Naive thymus-derived CD4-positive, alpha-beta T cell (primary cell): ENCODE measurements at regions of chr13 and their contacts with region 1.

Region 1: GRCh38 chr13:40982772-40983171 is 36.3 kb downstream of the ELF1 start:
- DNase-seq: peak in 8 of 9 donors; percentile 41 to 90 (median 80)
- ATAC-seq: peak; percentile 82
- H3K4me3 ChIP-seq: no peak overlapping the region
- H3K4me3 Mint-ChIP-seq: peak overlapping the region; percentile 76 to 99 (median 94)
- H3K27ac ChIP-seq: peak overlapping the region; percentile 86
- H3K27ac Mint-ChIP-seq: peak overlapping the region; percentile 93 to 98 (median 96)
- H3K4me1 ChIP-seq: peaks cover 30 to 34% of the 10 kb centered on the region in 2 donors
- H3K4me1 Mint-ChIP-seq: peaks cover 40 to 77% (median 65%) of the 10 kb centered on the region in 7 donors
- H3K27me3 ChIP-seq: no peaks in the 10 kb centered on the region
- H3K27me3 Mint-ChIP-seq: no peaks in the 10 kb centered on the region

Region 2: DNA sequence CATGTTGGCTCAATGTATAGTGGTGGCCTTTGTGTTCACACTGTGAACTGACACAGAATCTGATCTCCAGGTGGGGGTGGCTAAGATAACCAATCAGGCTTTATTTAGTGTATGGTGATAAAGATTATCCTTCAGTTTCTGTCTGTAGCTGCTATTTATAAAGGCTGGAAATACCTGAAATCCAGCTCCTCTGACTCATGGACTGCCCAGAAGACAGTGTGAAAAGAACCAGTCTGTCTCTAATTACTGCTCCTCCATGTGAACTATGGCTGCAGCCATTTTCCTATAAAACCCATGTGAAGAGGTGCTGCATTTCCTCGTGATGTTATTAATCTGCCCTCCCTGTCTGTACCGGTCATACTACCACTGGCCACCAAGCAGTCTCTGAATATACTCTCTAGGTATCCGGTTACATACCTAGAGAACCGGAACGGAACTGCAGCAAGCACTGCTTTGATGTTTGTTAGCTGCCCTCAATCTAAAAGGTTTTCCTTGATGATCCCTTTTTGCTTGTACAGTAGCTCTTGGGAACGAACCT is 1617.8 kb before region 1 on chr13:
- CTCF ChIA-PET with region 1: no interaction called
- POLR2A ChIA-PET with region 1: no interaction called
- intact Hi-C with region 1: no loop called
- DNase-seq: no peak
- ATAC-seq: no peak
- H3K4me3 ChIP-seq: no peak overlapping the region
- H3K4me3 Mint-ChIP-seq: no peak overlapping the region
- H3K27ac ChIP-seq: no peak overlapping the region
- H3K27ac Mint-ChIP-seq: no peak overlapping the region
- H3K4me1 ChIP-seq: no peaks in the 10 kb centered on the region
- H3K4me1 Mint-ChIP-seq: no peaks in the 10 kb centered on the region
- H3K27me3 ChIP-seq: peaks cover 0 to 6% of the 10 kb centered on the region in 2 donors
- H3K27me3 Mint-ChIP-seq: peaks cover 0 to 30% (median 20%) of the 10 kb centered on the region in 5 donors

Region 3: GRCh38 chr13:40494513-40494912 is 488.3 kb before region 1 on chr13:
- CTCF ChIA-PET with region 1: no interaction called
- POLR2A ChIA-PET with region 1: no interaction called
- intact Hi-C with region 1: loop called in 1 of 2 experiments (anchors 5 kb)
- DNase-seq: peak in 7 of 9 donors; percentile 18 to 64 (median 59)
- ATAC-seq: peak; percentile 66
- H3K4me3 ChIP-seq: peak overlapping the region; percentile 49
- H3K4me3 Mint-ChIP-seq: peak overlapping the region; percentile 76 to 97 (median 85)
- H3K27ac ChIP-seq: peak overlapping the region; percentile 70
- H3K27ac Mint-ChIP-seq: peak overlapping the region; percentile 88 to 98 (median 96)
- H3K4me1 ChIP-seq: peaks cover 38 to 66% of the 10 kb centered on the region in 2 donors
- H3K4me1 Mint-ChIP-seq: peaks cover 54 to 92% (median 85%) of the 10 kb centered on the region in 7 donors
- H3K27me3 ChIP-seq: no peaks in the 10 kb centered on the region
- H3K27me3 Mint-ChIP-seq: no peaks in the 10 kb centered on the region

Region 4: GRCh38 chr13:40819797-40820315 is 162.9 kb before region 1 on chr13:
- CTCF ChIA-PET with region 1: no interaction called
- POLR2A ChIA-PET with region 1: no interaction called
- intact Hi-C with region 1: no loop called
- DNase-seq: no peak
- ATAC-seq: no peak
- H3K4me3 ChIP-seq: no peak overlapping the region
- H3K4me3 Mint-ChIP-seq: no peak overlapping the region
- H3K27ac ChIP-seq: no peak overlapping the region
- H3K27ac Mint-ChIP-seq: peak overlapping the region in 1 of 9 donors; percentile 24
- H3K4me1 ChIP-seq: no peaks in the 10 kb centered on the region
- H3K4me1 Mint-ChIP-seq: peaks cover 0 to 14% (median 0%) of the 10 kb centered on the region in 7 donors
- H3K27me3 ChIP-seq: no peaks in the 10 kb centered on the region
- H3K27me3 Mint-ChIP-seq: no peaks in the 10 kb centered on the region

Region 5: GRCh38 chr13:40946485-40946884 is 36.3 kb before region 1 on chr13:
- CTCF ChIA-PET with region 1: no interaction called
- POLR2A ChIA-PET with region 1: no interaction called
- intact Hi-C with region 1: loop called in 1 of 2 experiments (anchors 5 kb)
- DNase-seq: no peak
- ATAC-seq: no peak
- H3K4me3 ChIP-seq: no peak overlapping the region
- H3K4me3 Mint-ChIP-seq: no peak overlapping the region
- H3K27ac ChIP-seq: no peak overlapping the region
- H3K27ac Mint-ChIP-seq: peak overlapping the region in 8 of 9 donors; percentile 58 to 91 (median 74)
- H3K4me1 ChIP-seq: peaks cover 3 to 4% of the 10 kb centered on the region in 2 donors
- H3K4me1 Mint-ChIP-seq: peaks cover 25 to 74% (median 51%) of the 10 kb centered on the region in 7 donors
- H3K27me3 ChIP-seq: no peaks in the 10 kb centered on the region
- H3K27me3 Mint-ChIP-seq: no peaks in the 10 kb centered on the region

Region 6: GRCh38 chr13:40992678-40993518 is 10.1 kb after region 1 on chr13:
- CTCF ChIA-PET with region 1: interaction called, 9 read pairs
- POLR2A ChIA-PET with region 1: interaction called, 12 read pairs
- intact Hi-C with region 1: loop called (anchors 1 kb)
- DNase-seq: peak in 1 of 9 donors; percentile 52
- ATAC-seq: peak; percentile 50
- H3K4me3 ChIP-seq: no peak overlapping the region
- H3K4me3 Mint-ChIP-seq: peak overlapping the region; percentile 12 to 57 (median 46)
- H3K27ac ChIP-seq: peak overlapping the region; percentile 57
- H3K27ac Mint-ChIP-seq: peak overlapping the region; percentile 54 to 94 (median 87)
- H3K4me1 ChIP-seq: peaks cover 48 to 64% of the 10 kb centered on the region in 2 donors
- H3K4me1 Mint-ChIP-seq: peaks cover 58 to 98% (median 91%) of the 10 kb centered on the region in 7 donors
- H3K27me3 ChIP-seq: no peaks in the 10 kb centered on the region
- H3K27me3 Mint-ChIP-seq: no peaks in the 10 kb centered on the region

Region 7: GRCh38 chr13:41019011-41019487 is 36.3 kb after region 1 on chr13 and contains the start of gene ELF1:
- CTCF ChIA-PET with region 1: interaction called, 4 read pairs
- POLR2A ChIA-PET with region 1: interaction called, 11 read pairs
- intact Hi-C with region 1: loop called (anchors 1 kb)
- DNase-seq: peak in 8 of 9 donors; percentile 35 to 83 (median 75)
- ATAC-seq: peak; percentile 93
- H3K4me3 ChIP-seq: peak within 1 kb of the TSS; percentile 76
- H3K4me3 Mint-ChIP-seq: peak within 1 kb of the TSS; percentile 79 to 94 (median 90)
- H3K27ac ChIP-seq: peak within 1 kb of the TSS; percentile 93
- H3K27ac Mint-ChIP-seq: peak within 1 kb of the TSS; percentile 90 to 98 (median 96)
- H3K4me1 ChIP-seq: peaks cover 14 to 22% of the 10 kb centered on the region in 2 donors
- H3K4me1 Mint-ChIP-seq: peaks cover 29 to 61% (median 50%) of the 10 kb centered on the region in 7 donors
- H3K27me3 ChIP-seq: no peaks in the 10 kb centered on the region
- H3K27me3 Mint-ChIP-seq: no peaks in the 10 kb centered on the region
- total RNA-seq, gene ELF1: 117 to 193 (median 180) TPM

Region 8: GRCh38 chr13:41310963-41311606 is 328.3 kb after region 1 on chr13 and contains the start of gene NAA16:
- CTCF ChIA-PET with region 1: no interaction called
- POLR2A ChIA-PET with region 1: interaction called, 3 read pairs
- intact Hi-C with region 1: loop called in 1 of 2 experiments (anchors 5 kb)
- DNase-seq: peak; percentile 91 to 99 (median 94)
- ATAC-seq: peak; percentile 91
- H3K4me3 ChIP-seq: peak within 1 kb of the TSS; percentile 97
- H3K4me3 Mint-ChIP-seq: peak within 1 kb of the TSS; percentile 80 to 99 (median 98)
- H3K27ac ChIP-seq: peak within 1 kb of the TSS; percentile 91
- H3K27ac Mint-ChIP-seq: peak within 1 kb of the TSS; percentile 76 to 96 (median 95)
- H3K4me1 ChIP-seq: peaks cover 25 to 29% of the 10 kb centered on the region in 2 donors
- H3K4me1 Mint-ChIP-seq: peaks cover 14 to 55% (median 41%) of the 10 kb centered on the region in 7 donors
- H3K27me3 ChIP-seq: no peaks in the 10 kb centered on the region
- H3K27me3 Mint-ChIP-seq: no peaks in the 10 kb centered on the region
- total RNA-seq, gene NAA16: 30.6 to 99.6 (median 90.4) TPM

Region 9: DNA sequence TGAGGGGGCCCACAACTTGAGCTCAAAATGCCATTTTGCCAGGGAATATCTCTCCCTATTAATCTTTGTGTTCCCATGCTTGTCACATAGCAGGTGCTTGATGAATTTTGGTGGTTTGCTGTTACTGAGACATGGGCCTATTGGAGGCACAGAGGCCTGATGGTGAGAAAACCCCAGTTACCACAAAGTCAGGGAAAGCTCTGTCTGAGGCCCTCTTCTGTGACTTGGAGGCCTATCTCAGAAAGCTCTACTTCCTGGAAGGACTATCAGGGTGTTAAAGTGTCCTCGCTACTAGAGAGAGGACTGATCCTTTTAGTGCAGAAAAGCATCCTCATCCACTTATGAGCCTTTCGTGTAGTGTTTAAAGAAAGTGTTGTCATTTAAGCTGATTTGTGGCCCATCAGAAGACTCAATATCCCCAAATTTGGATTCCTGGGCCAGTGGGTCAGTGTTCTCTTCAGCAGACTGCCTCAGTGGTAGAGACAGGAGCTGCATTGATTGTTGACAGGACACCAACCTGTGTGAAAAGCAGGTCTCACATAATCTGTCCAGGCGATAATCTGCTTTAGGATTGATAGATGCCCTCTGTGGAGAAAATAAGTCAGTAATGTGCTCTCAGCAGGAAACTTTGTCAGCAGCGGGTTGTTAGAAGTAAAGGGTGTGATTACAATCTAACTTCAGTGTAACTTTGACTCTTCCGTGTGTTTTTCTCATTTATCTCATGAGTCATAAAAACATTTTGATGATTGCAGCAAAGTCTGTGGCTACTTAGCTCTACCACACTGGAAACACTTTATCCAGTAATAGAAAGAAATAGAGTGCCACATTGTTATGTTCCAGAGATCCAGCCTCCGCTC is 1410.2 kb after region 1 on chr13:
- CTCF ChIA-PET with region 1: no interaction called
- POLR2A ChIA-PET with region 1: no interaction called
- intact Hi-C with region 1: loop called in 1 of 2 experiments (anchors 10 kb)
- DNase-seq: peak in 3 of 9 donors; percentile 13 to 51 (median 30)
- ATAC-seq: peak; percentile 68
- H3K4me3 ChIP-seq: no peak overlapping the region
- H3K4me3 Mint-ChIP-seq: peak overlapping the region; percentile 10 to 83 (median 68)
- H3K27ac ChIP-seq: no peak overlapping the region
- H3K27ac Mint-ChIP-seq: peak overlapping the region; percentile 2 to 98 (median 78)
- H3K4me1 ChIP-seq: peaks cover 47 to 68% of the 10 kb centered on the region in 2 donors
- H3K4me1 Mint-ChIP-seq: peaks cover 32 to 77% (median 73%) of the 10 kb centered on the region in 7 donors
- H3K27me3 ChIP-seq: no peaks in the 10 kb centered on the region
- H3K27me3 Mint-ChIP-seq: no peaks in the 10 kb centered on the region